Activated CD8-positive, alpha-beta memory T cell treated with anti-CD3 and anti-CD28 coated beads, Interleukin-2, amount 10 ng/mL, durations not matched to agents 7 days and 5 days (primary cell): ENCODE measurements at regions of chr6 and their contacts with region 1.

Region 1: DNA sequence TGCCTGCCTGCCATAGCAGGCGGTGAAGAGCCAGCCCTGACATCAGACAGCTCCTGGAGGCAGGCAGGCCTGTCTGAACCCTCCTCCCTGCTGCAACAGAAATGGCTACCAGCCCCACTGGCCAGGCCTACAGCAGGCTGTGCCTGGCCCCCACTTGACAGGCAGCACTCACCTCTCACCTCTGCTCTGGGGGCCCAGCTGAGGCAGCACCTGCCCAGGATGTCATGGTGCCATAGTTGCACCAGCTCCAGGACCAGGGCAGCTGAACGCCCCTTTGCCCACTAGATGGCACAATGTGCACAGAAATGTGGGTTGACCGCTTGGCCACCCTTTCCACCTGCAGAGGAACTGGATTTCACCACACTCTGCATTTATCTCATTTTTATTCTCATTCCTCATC is 30.6 kb downstream of the MRPL14 start:
- DNase-seq: peak; percentile 84
- ATAC-seq: peak; percentile 89
- H3K4me3 Mint-ChIP-seq: no peak overlapping the region
- H3K27ac Mint-ChIP-seq: no peak overlapping the region
- H3K4me1 Mint-ChIP-seq: no peaks in the 10 kb centered on the region
- H3K27me3 Mint-ChIP-seq: no peaks in the 10 kb centered on the region

Region 2: DNA sequence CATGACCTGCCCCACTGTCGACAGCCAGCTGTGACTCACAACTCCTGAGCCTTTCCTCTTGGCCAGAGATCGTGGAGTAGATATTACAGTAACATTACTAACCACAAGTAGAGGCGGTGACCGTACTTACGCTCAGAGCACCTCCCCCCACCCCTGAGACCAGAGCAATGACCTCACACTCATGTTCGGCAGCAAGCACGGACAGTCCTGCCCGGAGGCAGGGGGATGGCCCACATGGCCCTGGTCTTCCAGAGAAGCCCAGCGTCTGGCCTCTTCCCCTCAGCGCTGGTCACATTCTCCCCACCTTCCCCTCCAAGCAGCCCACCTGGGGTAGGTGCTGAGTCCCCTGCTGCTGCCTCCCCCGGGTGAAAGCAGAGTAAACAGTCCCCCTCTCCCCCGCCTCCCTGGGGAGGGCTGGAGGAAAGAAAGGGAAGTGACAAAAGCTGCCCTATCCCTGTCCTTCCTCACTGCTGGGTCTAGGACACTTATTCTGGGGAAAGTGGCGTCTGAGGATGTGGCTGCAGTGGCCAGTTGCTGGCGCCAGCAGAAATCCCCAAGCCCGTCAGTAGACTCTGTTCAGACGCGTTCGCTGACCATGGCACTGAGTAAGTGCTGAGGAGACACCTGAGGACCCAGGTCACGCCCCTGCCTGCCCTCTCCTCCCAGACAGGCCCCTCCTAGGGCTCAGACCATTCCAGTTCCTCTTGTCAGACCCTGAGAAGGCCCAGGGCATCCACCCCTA is 37.8 kb before region 1 on chr6:
- CTCF ChIA-PET with region 1: no interaction called
- DNase-seq: peak; percentile 57
- ATAC-seq: peak; percentile 63
- H3K4me3 Mint-ChIP-seq: no peak overlapping the region
- H3K27ac Mint-ChIP-seq: no peak overlapping the region
- H3K4me1 Mint-ChIP-seq: peaks cover 14% of the 10 kb centered on the region
- H3K27me3 Mint-ChIP-seq: peaks cover 2% of the 10 kb centered on the region

Region 3: DNA sequence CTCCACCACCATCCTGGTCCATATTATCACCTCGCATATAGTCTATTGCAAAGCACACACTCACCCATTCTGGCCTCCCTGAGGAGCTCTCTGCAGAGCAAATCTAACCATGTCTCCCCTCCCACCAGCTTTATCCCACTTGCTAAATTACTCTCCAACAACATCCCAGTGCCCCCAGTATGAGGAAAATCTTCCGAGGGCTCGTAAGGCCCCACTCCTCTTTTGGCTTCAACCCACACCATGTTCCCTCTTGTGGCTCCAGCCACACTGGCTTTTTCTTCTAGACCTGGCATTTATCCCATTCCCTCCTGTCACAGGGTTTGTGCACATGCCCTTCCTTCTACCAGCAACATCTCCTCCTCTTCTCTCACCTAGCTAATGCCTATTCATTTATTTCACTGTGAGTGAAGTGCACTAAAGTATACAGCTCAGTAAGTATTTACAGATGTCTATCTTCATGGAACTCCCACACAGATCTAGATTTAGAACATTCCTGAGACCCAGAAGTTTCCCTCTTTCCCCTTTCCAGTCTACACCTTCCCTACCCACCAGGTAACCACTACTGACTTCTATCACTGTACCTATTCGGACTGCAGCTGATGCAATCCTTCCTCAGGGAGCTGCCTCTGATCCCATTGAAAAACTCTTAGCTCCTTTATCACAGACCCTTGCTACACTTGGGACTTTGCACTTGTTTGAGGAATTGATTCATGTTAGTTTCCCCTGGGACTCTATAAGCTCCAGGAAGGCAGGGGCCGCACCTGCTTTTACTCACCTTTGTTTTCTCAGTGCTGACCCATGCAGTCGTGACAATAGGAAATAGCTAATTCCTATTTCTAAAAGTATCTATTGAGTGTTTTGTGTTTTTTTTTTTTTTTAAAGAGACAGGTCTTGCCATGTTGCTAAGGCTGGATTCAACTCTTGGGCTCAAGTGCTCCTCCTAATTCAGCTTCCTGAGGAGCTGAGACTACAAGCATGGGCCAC is 15.1 kb after region 1 on chr6:
- CTCF ChIA-PET with region 1: interaction called, 13 read pairs
- DNase-seq: no peak
- ATAC-seq: no peak
- H3K4me3 Mint-ChIP-seq: no peak overlapping the region
- H3K27ac Mint-ChIP-seq: no peak overlapping the region
- H3K4me1 Mint-ChIP-seq: peaks cover 17% of the 10 kb centered on the region
- H3K27me3 Mint-ChIP-seq: no peaks in the 10 kb centered on the region

Region 4: DNA sequence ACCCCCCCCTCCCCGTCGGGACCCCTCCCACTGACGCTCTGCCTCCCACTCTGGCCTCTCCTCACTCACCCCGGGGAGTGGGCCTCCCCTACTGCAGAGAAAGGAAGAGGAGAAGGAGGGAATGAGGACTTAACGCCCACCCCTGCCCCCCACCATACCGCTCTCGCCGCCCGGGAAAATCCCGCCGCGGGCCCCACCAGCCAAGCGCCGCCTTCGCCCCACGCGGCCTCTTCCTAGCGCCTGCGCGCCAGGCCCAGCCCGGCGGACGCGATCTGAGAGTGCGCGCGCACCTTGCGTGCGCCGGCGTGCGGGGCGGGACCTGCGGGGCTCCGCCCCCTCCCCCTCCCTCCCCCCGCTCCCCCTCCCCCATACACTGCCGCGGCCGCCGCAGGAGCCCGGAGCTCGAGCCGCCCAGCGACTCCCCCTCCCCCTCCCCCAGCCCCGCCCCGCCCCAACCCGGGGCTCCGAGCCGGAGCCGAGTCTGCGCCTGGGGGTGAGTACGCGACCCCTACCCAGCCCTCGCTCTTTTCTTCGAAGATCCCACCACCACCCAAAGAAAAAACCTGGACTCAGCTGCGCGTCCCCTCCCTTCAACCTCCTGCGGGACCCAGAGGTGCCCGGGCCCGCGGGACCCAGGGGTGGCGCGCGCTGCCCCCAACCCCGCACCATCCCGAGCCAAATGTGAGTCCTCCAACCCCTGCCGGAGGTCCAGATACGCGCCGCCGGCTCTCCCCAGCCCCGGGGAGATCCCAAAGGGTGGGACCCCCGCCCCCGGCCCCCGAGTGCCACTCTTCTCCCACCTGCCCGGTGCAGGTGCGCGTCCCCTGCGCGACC is 30.8 kb after region 1 on chr6 and contains the starts of genes MRPL14 and TMEM63B:
- CTCF ChIA-PET with region 1: no interaction called
- DNase-seq: peak; percentile 90
- ATAC-seq: peak; percentile 94
- H3K4me3 Mint-ChIP-seq: peak within 1 kb of the TSS; percentile 98
- H3K27ac Mint-ChIP-seq: peak within 1 kb of the TSS; percentile 89
- H3K4me1 Mint-ChIP-seq: peaks cover 47% of the 10 kb centered on the region
- H3K27me3 Mint-ChIP-seq: no peaks in the 10 kb centered on the region
- total RNA-seq, gene MRPL14: 45.8 to 47.5 TPM
- total RNA-seq, gene TMEM63B: 11.1 to 11.6 TPM

Region 5: DNA sequence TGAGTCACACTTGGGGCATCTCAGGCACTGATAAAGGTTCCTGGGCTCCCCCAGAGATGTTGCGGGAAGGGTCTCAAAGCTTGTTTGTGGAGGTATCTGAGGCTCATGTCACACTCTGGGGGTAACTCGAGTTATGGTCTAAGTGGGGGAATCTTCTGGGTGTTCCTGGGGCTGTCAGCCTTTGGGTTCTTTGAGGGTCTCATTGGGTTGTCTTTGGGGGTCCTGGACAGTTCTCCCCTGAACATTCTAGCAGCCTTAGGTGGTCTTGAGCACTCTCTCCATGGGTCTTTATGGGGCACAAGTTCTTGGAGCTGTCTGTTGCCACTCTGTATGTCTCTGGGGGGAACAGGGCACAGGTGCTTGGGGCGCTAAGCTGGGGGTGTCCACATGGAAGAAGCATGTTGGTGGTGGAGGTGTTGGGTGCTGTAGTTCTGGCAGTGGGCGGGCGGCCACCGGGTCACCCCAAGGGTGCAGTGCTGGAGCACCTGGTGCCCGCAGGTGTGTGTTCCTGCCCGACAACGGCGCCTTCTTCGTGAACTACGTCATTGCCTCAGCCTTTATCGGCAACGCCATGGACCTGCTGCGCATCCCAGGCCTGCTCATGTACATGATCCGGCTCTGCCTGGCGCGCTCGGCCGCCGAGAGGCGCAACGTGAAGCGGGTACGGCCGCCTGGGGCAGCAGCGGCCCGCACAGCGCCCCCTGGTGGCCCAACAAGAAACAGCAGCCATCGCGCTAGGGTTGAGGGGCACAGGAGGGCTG is 54.9 kb after region 1 on chr6:
- CTCF ChIA-PET with region 1: interaction called, 61 read pairs
- DNase-seq: peak; percentile 83
- ATAC-seq: peak; percentile 93
- H3K4me3 Mint-ChIP-seq: no peak overlapping the region
- H3K27ac Mint-ChIP-seq: no peak overlapping the region
- H3K4me1 Mint-ChIP-seq: peaks cover 3% of the 10 kb centered on the region
- H3K27me3 Mint-ChIP-seq: no peaks in the 10 kb centered on the region